Naive thymus-derived CD8-positive, alpha-beta T cell (primary cell): ENCODE measurements at regions of chr15 and their contacts with region 1.

Region 1: DNA sequence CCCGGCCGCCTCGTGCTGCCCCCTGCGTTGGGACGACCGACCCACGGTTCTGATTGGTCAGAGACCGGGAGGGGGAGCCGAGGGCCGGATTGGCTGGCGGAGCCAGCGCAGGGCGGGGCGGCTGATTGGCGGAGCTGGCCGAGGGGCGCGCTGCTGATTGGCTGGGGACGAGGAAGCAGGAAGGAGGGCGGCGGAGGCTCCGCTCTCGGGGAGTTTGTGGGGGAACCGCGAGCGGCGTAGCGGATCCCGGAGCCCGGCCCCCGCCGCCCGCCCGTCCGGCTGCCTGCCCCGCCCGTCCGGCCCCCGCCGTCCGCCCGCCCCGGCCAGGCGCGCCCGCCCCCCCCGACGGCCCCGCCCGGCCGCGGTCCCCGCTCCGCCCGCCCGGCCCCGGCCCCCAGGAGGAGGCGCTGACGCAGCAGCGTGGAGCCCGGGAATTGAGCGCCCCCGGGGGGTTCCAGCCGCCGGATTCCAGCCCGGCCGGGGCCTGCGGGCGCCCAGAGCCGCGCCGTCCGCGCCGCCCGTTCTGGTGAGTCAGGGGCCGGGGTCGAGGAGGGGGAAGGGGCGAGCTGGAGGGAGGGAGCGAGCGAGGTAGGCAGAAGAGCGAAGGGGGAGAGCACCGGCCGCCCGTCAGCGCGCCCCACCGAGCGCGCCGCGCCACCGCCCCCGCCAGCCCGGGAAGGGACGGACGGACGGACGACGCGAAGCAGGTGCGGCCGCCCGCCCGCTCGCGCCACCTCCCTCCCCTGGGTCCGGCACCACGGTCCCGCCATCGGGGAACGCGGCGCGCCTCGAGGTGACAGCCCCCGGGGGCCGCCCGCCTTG is at the start of gene BAHD1:
- DNase-seq: peak; percentile 90 to 96 (median 92)
- ATAC-seq: peak; percentile 85 to 88
- H3K4me3 Mint-ChIP-seq: peak within 1 kb of the TSS; percentile 85 to 97 (median 94)
- H3K27ac Mint-ChIP-seq: peak within 1 kb of the TSS in 9 of 10 donors; percentile 75 to 94 (median 89)
- H3K4me1 Mint-ChIP-seq: peaks cover 46 to 67% (median 63%) of the 10 kb centered on the region in 4 donors
- H3K27me3 Mint-ChIP-seq: peaks cover 4 to 36% (median 14%) of the 10 kb centered on the region in 5 donors
- polyA plus RNA-seq, gene BAHD1: 1.5 to 3.3 (median 1.7) TPM

Region 2: GRCh38 chr15:40405501-40406381 is 35.2 kb before region 1 on chr15 and contains the start of gene IVD:
- POLR2A ChIA-PET with region 1: interaction called, 13 read pairs
- DNase-seq: peak; percentile 84 to 95 (median 88)
- ATAC-seq: peak; percentile 99
- H3K4me3 Mint-ChIP-seq: peak within 1 kb of the TSS; percentile 84 to 96 (median 92)
- H3K27ac Mint-ChIP-seq: peak within 1 kb of the TSS; percentile 58 to 97 (median 87)
- H3K4me1 Mint-ChIP-seq: peaks cover 12 to 45% (median 35%) of the 10 kb centered on the region in 4 donors
- H3K27me3 Mint-ChIP-seq: no peaks in the 10 kb centered on the region
- polyA plus RNA-seq, gene IVD: 48.2 to 77.7 (median 49.5) TPM

Region 3: GRCh38 chr15:40454904-40455391 is 14.0 kb after region 1 on chr15:
- POLR2A ChIA-PET with region 1: interaction called, 92 read pairs
- DNase-seq: peak in 1 of 10 donors; percentile 12
- ATAC-seq: peak; percentile 3 to 41
- H3K4me3 Mint-ChIP-seq: peak overlapping the region; percentile 79 to 94 (median 87)
- H3K27ac Mint-ChIP-seq: peak overlapping the region; percentile 83 to 98 (median 94)
- H3K4me1 Mint-ChIP-seq: peaks cover 59 to 79% (median 75%) of the 10 kb centered on the region in 4 donors
- H3K27me3 Mint-ChIP-seq: no peaks in the 10 kb centered on the region

Region 4: GRCh38 chr15:40470423-40471104 is 29.6 kb after region 1 on chr15 and contains the start of gene CHST14:
- POLR2A ChIA-PET with region 1: interaction called, 12 read pairs
- DNase-seq: peak; percentile 24 to 78 (median 54)
- ATAC-seq: peak; percentile 77 to 81
- H3K4me3 Mint-ChIP-seq: peak within 1 kb of the TSS; percentile 81 to 92 (median 88)
- H3K27ac Mint-ChIP-seq: peak within 1 kb of the TSS; percentile 70 to 97 (median 88)
- H3K4me1 Mint-ChIP-seq: peaks cover 12 to 43% (median 31%) of the 10 kb centered on the region in 4 donors
- H3K27me3 Mint-ChIP-seq: no peaks in the 10 kb centered on the region
- polyA plus RNA-seq, gene CHST14: 0.74 to 1.2 (median 0.77) TPM

Region 5: GRCh38 chr15:40506964-40507571 is 66.1 kb after region 1 on chr15:
- POLR2A ChIA-PET with region 1: interaction called, 10 read pairs
- DNase-seq: peak; percentile 48 to 78 (median 61)
- ATAC-seq: peak; percentile 69 to 87
- H3K4me3 Mint-ChIP-seq: peak overlapping the region in 7 of 10 donors; percentile 24 to 60 (median 47)
- H3K27ac Mint-ChIP-seq: peak overlapping the region in 1 of 10 donors; percentile 44
- H3K4me1 Mint-ChIP-seq: peaks cover 12 to 28% (median 20%) of the 10 kb centered on the region in 4 donors
- H3K27me3 Mint-ChIP-seq: peaks cover 31 to 77% (median 48%) of the 10 kb centered on the region in 5 donors